ENCODE measurements at regions of chr19 and their contacts with region 1.

Region 1: GRCh38 chr19:38394488-38394887 is 6.0 kb downstream of the SPRED3 start:
- DNase-seq: peak in 8 of 9 donors; percentile 37 to 76 (median 51)
- ATAC-seq: peak; percentile 75
- H3K4me3 ChIP-seq: peak overlapping the region; percentile 56
- H3K4me3 Mint-ChIP-seq: peak overlapping the region; percentile 65 to 84 (median 81)
- H3K27ac ChIP-seq: peak overlapping the region; percentile 60
- H3K27ac Mint-ChIP-seq: peak overlapping the region in 8 of 9 donors; percentile 5 to 84 (median 72)
- H3K4me1 ChIP-seq: peaks cover 5 to 19% of the 10 kb centered on the region in 2 donors
- H3K4me1 Mint-ChIP-seq: peaks cover 8 to 32% (median 25%) of the 10 kb centered on the region in 7 donors
- H3K27me3 ChIP-seq: no peaks in the 10 kb centered on the region
- H3K27me3 Mint-ChIP-seq: peaks cover 0 to 34% (median 9%) of the 10 kb centered on the region in 5 donors

Region 2: GRCh38 chr19:38849860-38850435 is 455.5 kb after region 1 on chr19 and contains the start of gene HNRNPL:
- CTCF ChIA-PET with region 1: no interaction called
- POLR2A ChIA-PET with region 1: no interaction called
- intact Hi-C with region 1: loop called in 1 of 2 experiments (anchors 2 kb)
- DNase-seq: peak; percentile 99 to 100 (median 100)
- ATAC-seq: peak; percentile 78
- H3K4me3 ChIP-seq: peak within 1 kb of the TSS; percentile 81
- H3K4me3 Mint-ChIP-seq: peak within 1 kb of the TSS; percentile 88 to 99 (median 96)
- H3K27ac ChIP-seq: peak within 1 kb of the TSS; percentile 96
- H3K27ac Mint-ChIP-seq: peak within 1 kb of the TSS; percentile 94 to 100 (median 99)
- H3K4me1 ChIP-seq: peaks cover 24 to 41% of the 10 kb centered on the region in 2 donors
- H3K4me1 Mint-ChIP-seq: peaks cover 30 to 67% (median 50%) of the 10 kb centered on the region in 7 donors
- H3K27me3 ChIP-seq: no peaks in the 10 kb centered on the region
- H3K27me3 Mint-ChIP-seq: peaks cover 0 to 5% (median 0%) of the 10 kb centered on the region in 5 donors
- total RNA-seq, gene HNRNPL: 339 to 539 (median 505) TPM